ENCODE measurements at regions of chr4 and their contacts with region 1.

Region 1: DNA sequence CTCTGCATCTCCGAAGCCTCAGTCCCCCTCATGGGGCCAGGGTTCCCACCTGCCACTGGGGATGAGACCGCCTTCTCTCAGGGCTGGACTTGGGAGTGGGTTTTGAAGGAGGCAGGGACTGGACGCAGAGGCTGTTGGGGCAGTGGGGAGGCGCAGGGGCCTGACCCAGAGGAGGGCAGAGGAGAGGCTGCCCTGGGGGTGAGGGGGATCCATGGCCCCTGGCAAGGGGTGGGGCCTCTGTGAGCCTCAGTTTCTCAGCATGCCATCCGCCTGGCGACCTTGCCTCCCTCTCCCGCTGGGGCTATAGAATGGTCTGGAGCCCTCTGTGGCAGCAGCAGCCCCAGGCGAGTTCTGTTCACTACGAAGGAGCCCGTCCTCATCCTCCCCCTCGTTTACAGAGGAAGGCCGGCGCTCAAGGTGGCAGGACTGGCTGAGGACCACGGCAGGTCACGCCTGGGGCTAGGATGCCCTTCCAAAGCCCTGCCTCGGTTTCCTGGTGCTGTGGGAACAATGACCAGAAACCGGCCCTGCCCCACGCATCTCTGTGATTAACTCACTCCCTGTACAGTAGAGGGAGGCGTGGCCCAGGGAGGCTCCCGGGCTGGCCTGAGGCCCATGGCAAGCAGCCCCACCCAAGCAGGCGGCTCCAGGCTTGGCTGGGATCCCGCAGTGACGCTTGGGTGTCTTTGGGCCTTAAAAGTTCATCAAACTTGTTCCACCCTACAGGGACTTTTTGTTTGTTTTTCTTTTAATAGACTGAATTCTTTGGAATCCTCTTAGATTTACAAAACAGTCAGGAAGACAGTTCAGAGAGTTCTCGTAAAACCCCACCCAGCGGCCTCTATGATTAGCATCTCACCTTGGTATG is 16.0 kb upstream of the SH3TC1 start:
- DNase-seq: peak; percentile 88
- ATAC-seq: peak; percentile 77

Region 2: DNA sequence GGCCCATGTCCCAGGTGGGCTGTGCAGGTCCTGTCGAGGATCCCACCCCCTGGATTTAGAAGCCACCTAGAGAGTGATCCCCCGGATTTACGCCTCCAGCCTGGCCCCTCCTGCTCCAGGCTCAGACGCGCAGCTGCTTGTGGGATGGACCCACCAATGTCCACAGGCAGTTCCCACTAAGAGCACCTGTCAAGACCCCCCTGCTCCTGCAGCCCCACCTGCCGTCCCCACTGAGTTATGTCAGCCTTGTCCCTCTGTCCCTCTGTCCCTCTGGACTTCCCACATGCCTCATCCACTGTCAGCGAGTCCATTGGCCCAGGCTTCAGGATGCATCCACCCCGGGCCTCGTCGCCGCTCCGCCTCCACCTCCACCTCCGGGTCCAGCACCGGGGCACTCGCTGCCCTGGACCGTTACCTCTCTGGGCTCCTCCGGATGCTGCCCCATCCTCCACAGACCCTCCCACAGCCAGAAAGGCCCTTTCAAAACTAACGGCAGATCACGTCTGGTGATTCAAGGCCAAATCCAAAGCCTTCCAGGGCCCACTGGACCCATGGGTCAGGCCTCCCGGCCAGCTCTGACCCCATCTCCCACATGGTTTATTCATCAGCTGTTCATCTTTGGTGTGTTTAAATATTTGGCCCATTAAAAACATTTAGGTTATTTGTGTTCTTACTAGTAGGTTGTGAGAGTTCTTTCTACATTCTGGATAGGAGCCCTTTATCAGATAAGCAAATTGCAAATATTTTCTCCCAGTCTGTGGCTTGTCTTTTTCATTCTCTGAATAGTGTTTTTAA is 114.8 kb after region 1 on chr4:
- intact Hi-C with region 1: no loop called
- DNase-seq: no peak
- ATAC-seq: peak; percentile 18

Region 3: GRCh38 chr4:8409264-8410065 is 226.4 kb after region 1 on chr4:
- intact Hi-C with region 1: loop called (anchors 5 kb)
- DNase-seq: peak; percentile 86
- ATAC-seq: peak; percentile 84

Region 4: GRCh38 chr4:8428293-8429097 is 245.4 kb after region 1 on chr4:
- intact Hi-C with region 1: no loop called
- DNase-seq: peak; percentile 94
- ATAC-seq: peak; percentile 97

Measured in Right ventricle myocardium inferior (tissue), 1 donor.